ENCODE measurements at regions of chr9 and their contacts with region 1.

Region 1: GRCh38 chr9:95810135-95810534 is 65.4 kb upstream of the ERCC6L2 start:
- DNase-seq: no peak
- H3K4me3 Mint-ChIP-seq: no peak overlapping the region
- H3K27ac Mint-ChIP-seq: no peak overlapping the region
- H3K4me1 Mint-ChIP-seq: peaks cover 25% of the 10 kb centered on the region
- H3K27me3 Mint-ChIP-seq: no peaks in the 10 kb centered on the region

Region 2: DNA sequence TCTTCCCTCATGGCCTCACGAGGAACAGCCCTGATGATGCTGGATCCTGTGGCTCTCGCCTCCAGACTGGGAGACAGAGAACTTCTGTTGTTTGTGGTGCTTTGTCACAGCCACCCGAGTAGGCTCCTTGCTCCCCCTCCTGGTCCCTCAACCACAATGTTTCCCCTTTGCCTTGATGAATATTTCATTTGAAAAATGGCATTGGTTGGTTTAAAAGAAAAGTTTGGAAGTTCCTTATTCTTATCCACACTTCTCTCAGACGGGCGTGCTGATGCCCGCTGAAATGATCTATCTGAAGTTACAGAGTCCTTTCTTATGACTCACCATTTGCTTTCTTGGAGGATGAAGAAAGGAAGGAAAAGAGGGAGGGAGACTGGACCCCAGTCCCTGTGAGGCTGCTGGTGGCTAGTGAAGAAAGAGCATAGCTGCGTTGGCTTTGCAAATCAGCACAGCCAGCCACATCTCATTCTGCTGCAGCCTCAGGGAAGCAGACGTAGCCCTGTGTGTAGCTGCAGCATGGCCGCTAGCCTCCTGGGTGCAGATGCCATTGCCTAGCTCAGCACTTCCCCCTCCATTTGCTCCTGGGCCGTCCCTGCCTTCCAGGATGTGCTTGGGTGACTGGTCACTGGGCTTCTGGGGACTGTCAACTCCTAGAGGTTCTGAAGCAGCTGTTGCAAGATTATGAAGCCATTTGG is 251.3 kb after region 1 on chr9:
- CTCF ChIA-PET with region 1: no interaction called
- intact Hi-C with region 1: loop called (anchors 2 kb)
- DNase-seq: peak; percentile 72
- H3K4me3 Mint-ChIP-seq: no peak overlapping the region
- H3K27ac Mint-ChIP-seq: no peak overlapping the region
- H3K4me1 Mint-ChIP-seq: peaks cover 8% of the 10 kb centered on the region
- H3K27me3 Mint-ChIP-seq: no peaks in the 10 kb centered on the region

Region 3: DNA sequence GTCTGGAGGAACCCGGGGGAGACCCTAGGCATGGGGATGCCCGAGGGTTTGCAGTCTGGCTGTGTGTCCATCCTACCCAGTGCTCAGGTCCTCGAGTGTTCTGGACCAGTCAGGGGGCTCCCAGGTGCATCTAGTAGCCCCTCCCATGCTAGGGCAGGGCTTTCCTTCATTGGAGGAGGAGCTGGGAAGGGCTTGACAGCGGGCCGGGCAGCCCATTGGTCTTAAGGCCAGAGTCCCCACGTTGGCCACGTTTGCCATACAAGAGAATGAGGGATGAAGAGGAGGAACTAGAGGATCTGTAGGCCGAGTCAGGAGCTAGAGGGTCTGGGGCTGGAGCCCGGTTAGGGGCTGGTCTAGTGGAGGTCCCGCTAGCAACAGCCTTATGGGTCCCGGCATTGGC is 1266.1 kb after region 1 on chr9:
- CTCF ChIA-PET with region 1: no interaction called
- intact Hi-C with region 1: no loop called
- DNase-seq: no peak
- H3K4me3 Mint-ChIP-seq: no peak overlapping the region
- H3K27ac Mint-ChIP-seq: no peak overlapping the region
- H3K4me1 Mint-ChIP-seq: no peaks in the 10 kb centered on the region
- H3K27me3 Mint-ChIP-seq: peaks cover 59% of the 10 kb centered on the region

Measured in activated naive CD4-positive, alpha-beta T cell treated with anti-CD3 and anti-CD28 coated beads for 36 hours (primary cell).